ENCODE measurements at regions of chr7 and their contacts with region 1.

Region 1: GRCh38 chr7:55415173-55415778 is 50.1 kb downstream of the LANCL2 start:
- DNase-seq: peak; percentile 14
- H3K4me3 ChIP-seq: no peak overlapping the region
- H3K27ac ChIP-seq: no peak overlapping the region
- H3K4me1 ChIP-seq: no peaks in the 10 kb centered on the region
- H3K27me3 ChIP-seq: no peaks in the 10 kb centered on the region
- CTCF ChIP-seq: peak; percentile 69 to 84 (median 84)
- POLR2A ChIP-seq: no peak

Region 2: GRCh38 chr7:55279080-55279845 is 136.0 kb before region 1 on chr7:
- intact Hi-C with region 1: loop called (anchors 2 kb)
- DNase-seq: no peak
- H3K4me3 ChIP-seq: no peak overlapping the region
- H3K27ac ChIP-seq: no peak overlapping the region
- H3K4me1 ChIP-seq: no peaks in the 10 kb centered on the region
- H3K27me3 ChIP-seq: no peaks in the 10 kb centered on the region
- CTCF ChIP-seq: no peak
- POLR2A ChIP-seq: no peak

Region 3: GRCh38 chr7:55534175-55534915 is 119.1 kb after region 1 on chr7:
- intact Hi-C with region 1: no loop called
- DNase-seq: peak; percentile 47
- H3K4me3 ChIP-seq: no peak overlapping the region
- H3K27ac ChIP-seq: peak overlapping the region; percentile 11 to 77 (median 44)
- H3K4me1 ChIP-seq: peaks cover 0 to 78% (median 43%) of the 10 kb centered on the region in 3 donors
- H3K27me3 ChIP-seq: no peaks in the 10 kb centered on the region
- CTCF ChIP-seq: no peak
- POLR2A ChIP-seq: no peak